ENCODE measurements at regions of chr2 and their contacts with region 1.

Region 1: GRCh38 chr2:119283860-119284331 is 60.3 kb downstream of the STEAP3 start:
- DNase-seq: peak; percentile 94 to 97
- ATAC-seq: peak; percentile 96
- H3K4me3 ChIP-seq: no peak overlapping the region
- H3K27ac ChIP-seq: peak overlapping the region; percentile 77 to 90 (median 83)
- H3K4me1 ChIP-seq: peaks cover 14 to 18% of the 10 kb centered on the region in 2 donors
- H3K27me3 ChIP-seq: no peaks in the 10 kb centered on the region
- CTCF ChIP-seq: no peak
- POLR2A ChIP-seq: no peak

Region 2: DNA sequence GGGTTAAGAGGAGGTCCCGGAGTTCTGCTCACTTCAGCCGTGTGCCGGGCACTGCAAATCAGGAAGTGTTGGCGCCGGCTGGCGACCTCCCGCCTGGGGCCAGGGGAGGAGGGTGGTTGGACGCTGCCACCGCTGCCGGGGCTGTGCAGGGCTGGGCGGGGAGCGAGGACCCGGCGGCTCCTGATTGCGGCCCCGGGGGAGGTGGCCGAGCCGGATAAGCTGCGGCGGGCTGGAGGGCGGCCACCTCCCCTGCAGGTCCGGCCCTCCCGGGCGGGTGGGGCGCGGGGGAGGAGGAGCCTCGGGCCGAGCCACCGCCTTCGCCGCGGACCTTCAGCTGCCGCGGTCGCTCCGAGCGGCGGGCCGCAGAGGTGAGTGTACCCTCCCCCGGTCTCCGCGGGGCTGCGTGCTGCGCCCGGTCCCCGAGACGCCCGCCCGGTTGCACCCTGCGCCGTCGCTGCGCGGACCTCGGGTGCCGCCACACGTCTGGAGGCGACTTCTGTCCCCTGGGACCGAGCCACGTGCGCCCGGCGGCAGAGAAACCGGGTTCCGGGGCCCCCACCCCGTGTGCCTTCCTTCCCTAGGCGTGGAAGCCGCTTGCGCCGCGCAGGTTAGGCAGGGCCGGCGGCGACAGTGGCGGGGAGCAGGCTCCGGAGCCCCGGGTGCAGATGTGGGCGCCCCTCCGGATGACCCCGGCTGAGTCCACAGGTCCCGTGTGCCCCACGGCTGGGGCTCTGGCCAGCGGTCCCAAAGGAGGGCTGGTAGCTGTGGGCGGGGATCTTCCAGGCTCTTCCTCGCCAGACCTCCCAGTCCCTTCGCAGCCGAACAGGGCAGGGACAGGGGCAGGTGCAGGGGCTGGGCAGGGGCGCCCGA is 60.1 kb before region 1 on chr2 and contains the start of gene STEAP3:
- in situ Hi-C with region 1: no loop called
- intact Hi-C with region 1: loop called (anchors 2 kb)
- DNase-seq: peak; percentile 62 to 81
- ATAC-seq: peak; percentile 71 to 72
- H3K4me3 ChIP-seq: peak within 1 kb of the TSS; percentile 77 to 88 (median 88)
- H3K27ac ChIP-seq: peak within 1 kb of the TSS; percentile 92 to 98 (median 96)
- H3K4me1 ChIP-seq: peaks cover 28 to 29% of the 10 kb centered on the region in 2 donors
- H3K27me3 ChIP-seq: no peaks in the 10 kb centered on the region
- CTCF ChIP-seq: no peak
- POLR2A ChIP-seq: peak; percentile 90 to 94
- total RNA-seq, gene STEAP3: 10.1 to 21.7 (median 10.6) TPM

Region 3: DNA sequence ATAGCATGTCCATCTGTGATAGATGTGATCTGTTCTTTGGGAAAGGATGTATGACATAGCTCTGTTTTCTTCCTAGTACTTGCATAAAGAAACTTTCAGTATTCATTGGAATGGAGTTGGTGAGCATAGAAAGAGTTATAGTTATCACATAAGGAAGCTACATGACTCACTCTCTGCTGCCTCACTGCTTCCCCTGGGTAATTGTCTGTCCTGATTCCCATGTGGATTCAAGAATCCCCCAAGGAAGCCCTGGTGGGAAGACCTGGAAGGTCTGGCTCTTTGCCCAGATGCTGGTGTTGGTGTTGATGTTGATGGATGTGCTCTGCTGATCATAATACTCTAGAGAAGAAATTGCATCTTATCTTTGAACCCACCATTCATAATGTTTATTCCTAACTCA is 536.4 kb after region 1 on chr2:
- in situ Hi-C with region 1: no loop called
- intact Hi-C with region 1: no loop called
- DNase-seq: no peak
- ATAC-seq: no peak
- H3K4me3 ChIP-seq: no peak overlapping the region
- H3K27ac ChIP-seq: no peak overlapping the region
- H3K4me1 ChIP-seq: peaks cover 11 to 22% of the 10 kb centered on the region in 2 donors
- H3K27me3 ChIP-seq: no peaks in the 10 kb centered on the region
- CTCF ChIP-seq: no peak
- POLR2A ChIP-seq: no peak

Measured in gastrocnemius medialis (tissue), 4 donors.